ENCODE measurements at regions of chr5 and their contacts with region 1.

Region 1: DNA sequence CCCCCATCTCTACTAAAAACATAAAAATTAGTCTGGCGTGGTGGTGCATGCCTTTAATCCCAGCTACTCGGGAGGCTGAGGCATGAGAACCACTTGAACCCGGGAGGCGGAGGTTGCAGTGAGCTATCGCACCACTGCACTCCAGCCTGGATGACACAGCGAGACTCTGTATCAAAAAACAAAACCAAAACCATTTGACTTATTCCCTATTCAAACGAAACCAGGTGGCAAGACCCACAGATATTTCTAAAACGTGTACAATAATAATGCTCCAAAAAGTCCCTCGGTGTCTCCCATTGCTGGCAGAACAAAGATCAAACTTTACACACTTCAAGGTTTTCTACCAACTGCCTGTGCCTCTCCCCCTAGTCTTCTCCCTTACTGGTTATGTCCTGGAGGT is 29.8 kb downstream of the HMGCR start:
- DNase-seq: no peak
- ATAC-seq: no peak
- H3K4me3 ChIP-seq: no peak overlapping the region
- H3K27ac ChIP-seq: no peak overlapping the region
- H3K4me1 ChIP-seq: no peaks in the 10 kb centered on the region
- H3K27me3 ChIP-seq: no peaks in the 10 kb centered on the region
- CTCF ChIP-seq: no peak

Region 2: DNA sequence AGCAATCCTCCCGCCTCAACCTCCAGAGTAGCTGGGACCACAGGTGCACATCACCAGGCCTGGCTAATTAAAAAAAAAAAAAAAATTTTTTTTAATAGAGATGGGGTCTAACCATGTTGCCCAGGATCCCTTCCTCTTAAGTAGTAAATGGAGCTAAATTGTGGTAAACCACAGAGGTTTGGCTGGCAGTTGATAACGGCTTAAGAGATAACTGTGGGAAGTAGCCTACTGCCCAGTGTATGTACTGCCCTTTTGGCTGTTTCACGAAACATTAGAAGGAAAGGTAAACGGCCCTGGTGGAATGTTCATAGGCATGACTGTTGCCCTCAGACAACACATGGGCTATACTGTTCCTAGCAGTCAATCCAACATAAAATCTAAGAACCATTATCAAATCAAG is 14.7 kb after region 1 on chr5:
- intact Hi-C with region 1: loop called in 1 of 2 experiments (anchors 1 kb)
- DNase-seq: no peak
- ATAC-seq: no peak
- H3K4me3 ChIP-seq: no peak overlapping the region
- H3K27ac ChIP-seq: no peak overlapping the region
- H3K4me1 ChIP-seq: no peaks in the 10 kb centered on the region
- H3K27me3 ChIP-seq: no peaks in the 10 kb centered on the region
- CTCF ChIP-seq: no peak